CD4-positive, alpha-beta memory T cell (primary cell): ENCODE measurements at regions of chr14 and their contacts with region 1.

Region 1: GRCh38 chr14:22579236-22579635 is 9.8 kb downstream of the DAD1 start:
- DNase-seq: no peak
- H3K4me3 ChIP-seq: no peak overlapping the region
- H3K4me3 Mint-ChIP-seq: peak overlapping the region in 4 of 8 donors; percentile 1 to 76 (median 19)
- H3K27ac ChIP-seq: no peak overlapping the region
- H3K27ac Mint-ChIP-seq: peak overlapping the region; percentile 1 to 87 (median 54)
- H3K4me1 ChIP-seq: peaks cover 37% of the 10 kb centered on the region
- H3K4me1 Mint-ChIP-seq: peaks cover 41 to 66% (median 53%) of the 10 kb centered on the region in 4 donors
- H3K27me3 ChIP-seq: no peaks in the 10 kb centered on the region
- H3K27me3 Mint-ChIP-seq: no peaks in the 10 kb centered on the region

Region 2: DNA sequence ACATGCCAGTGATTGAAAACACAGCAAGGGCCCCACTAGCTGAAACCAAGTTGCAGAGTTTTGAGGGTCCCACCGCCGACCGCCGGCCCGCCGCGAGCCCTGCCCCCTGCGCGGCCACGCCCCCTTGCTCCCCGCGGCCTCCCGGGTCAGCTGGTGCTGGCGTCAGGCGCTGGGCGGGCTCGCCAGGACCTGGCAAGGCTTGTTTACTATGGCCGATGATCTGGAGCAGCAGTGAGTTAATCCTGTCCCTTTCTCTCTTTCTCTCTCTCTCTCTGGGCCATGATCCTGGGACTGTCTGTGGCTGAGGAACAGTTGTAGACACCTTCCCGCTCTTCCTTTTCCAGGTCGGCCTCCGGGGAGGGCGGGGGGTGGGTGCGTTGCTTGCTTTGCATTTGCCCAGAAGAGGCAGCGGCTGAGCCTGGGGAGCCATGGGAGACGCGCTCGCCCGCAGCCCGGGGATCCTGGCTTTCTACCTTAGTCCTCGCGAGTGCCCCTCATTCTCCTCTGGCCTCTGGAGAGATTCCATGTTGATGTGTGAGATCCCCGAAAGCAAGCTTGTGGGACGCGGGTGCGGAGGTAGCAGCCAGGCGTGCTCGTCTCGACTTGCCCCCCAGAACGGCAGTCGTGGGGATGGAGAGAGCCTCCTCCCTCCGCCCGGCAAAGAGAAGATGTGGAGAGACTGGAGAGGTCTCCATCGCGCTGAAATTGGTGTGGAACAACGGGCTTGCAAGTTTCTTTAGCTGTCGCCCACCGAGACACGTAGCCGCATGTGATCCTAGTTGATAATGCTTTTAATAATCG is 19.1 kb after region 1 on chr14 and contains the start of gene ABHD4:
- CTCF ChIA-PET with region 1: interaction called, 174 read pairs
- POLR2A ChIA-PET with region 1: interaction called, 8 read pairs
- intact Hi-C with region 1: loop called (anchors 2 kb)
- DNase-seq: peak; percentile 51 to 65 (median 54)
- H3K4me3 ChIP-seq: peak within 1 kb of the TSS; percentile 79 to 84
- H3K4me3 Mint-ChIP-seq: peak within 1 kb of the TSS; percentile 92 to 98 (median 97)
- H3K27ac ChIP-seq: peak within 1 kb of the TSS; percentile 74
- H3K27ac Mint-ChIP-seq: peak within 1 kb of the TSS; percentile 77 to 99 (median 94)
- H3K4me1 ChIP-seq: peaks cover 20% of the 10 kb centered on the region
- H3K4me1 Mint-ChIP-seq: peaks cover 16 to 43% (median 32%) of the 10 kb centered on the region in 4 donors
- H3K27me3 ChIP-seq: no peaks in the 10 kb centered on the region
- H3K27me3 Mint-ChIP-seq: no peaks in the 10 kb centered on the region
- total RNA-seq, gene ABHD4: 18.8 to 22.4 TPM